Activated B cell treated with CpG ODN at 0.5 μM for 24 hours (primary cell): ENCODE measurements at regions of chr18 and their contacts with region 1.

Region 1: GRCh38 chr18:48951448-48952286 is 902 bp upstream of the SMAD7 start:
- DNase-seq: peak; percentile 77
- ATAC-seq: peak; percentile 46
- H3K4me3 Mint-ChIP-seq: peak overlapping the region; percentile 95
- H3K27ac Mint-ChIP-seq: peak overlapping the region; percentile 98
- H3K4me1 Mint-ChIP-seq: peaks cover 32% of the 10 kb centered on the region
- H3K27me3 Mint-ChIP-seq: no peaks in the 10 kb centered on the region
- CTCF ChIP-seq: no peak

Region 2: GRCh38 chr18:48785091-48785614 is 166.5 kb before region 1 on chr18:
- CTCF ChIA-PET with region 1: interaction called, 5 read pairs
- POLR2A ChIA-PET with region 1: interaction called, 21 read pairs
- intact Hi-C with region 1: loop called (anchors 1 kb)
- DNase-seq: peak; percentile 47
- ATAC-seq: peak; percentile 91
- H3K4me3 Mint-ChIP-seq: peak overlapping the region; percentile 64
- H3K27ac Mint-ChIP-seq: peak overlapping the region; percentile 84
- H3K4me1 Mint-ChIP-seq: peaks cover 62% of the 10 kb centered on the region
- H3K27me3 Mint-ChIP-seq: no peaks in the 10 kb centered on the region
- CTCF ChIP-seq: no peak

Region 3: GRCh38 chr18:48868468-48869466 is 82.9 kb before region 1 on chr18:
- CTCF ChIA-PET with region 1: interaction called, 11 read pairs
- POLR2A ChIA-PET with region 1: interaction called, 11 read pairs
- intact Hi-C with region 1: loop called (anchors 1 kb)
- DNase-seq: peak; percentile 44
- ATAC-seq: peak; percentile 95
- H3K4me3 Mint-ChIP-seq: peak overlapping the region; percentile 13
- H3K27ac Mint-ChIP-seq: peak overlapping the region; percentile 85
- H3K4me1 Mint-ChIP-seq: peaks cover 17% of the 10 kb centered on the region
- H3K27me3 Mint-ChIP-seq: no peaks in the 10 kb centered on the region
- CTCF ChIP-seq: no peak

Region 4: DNA sequence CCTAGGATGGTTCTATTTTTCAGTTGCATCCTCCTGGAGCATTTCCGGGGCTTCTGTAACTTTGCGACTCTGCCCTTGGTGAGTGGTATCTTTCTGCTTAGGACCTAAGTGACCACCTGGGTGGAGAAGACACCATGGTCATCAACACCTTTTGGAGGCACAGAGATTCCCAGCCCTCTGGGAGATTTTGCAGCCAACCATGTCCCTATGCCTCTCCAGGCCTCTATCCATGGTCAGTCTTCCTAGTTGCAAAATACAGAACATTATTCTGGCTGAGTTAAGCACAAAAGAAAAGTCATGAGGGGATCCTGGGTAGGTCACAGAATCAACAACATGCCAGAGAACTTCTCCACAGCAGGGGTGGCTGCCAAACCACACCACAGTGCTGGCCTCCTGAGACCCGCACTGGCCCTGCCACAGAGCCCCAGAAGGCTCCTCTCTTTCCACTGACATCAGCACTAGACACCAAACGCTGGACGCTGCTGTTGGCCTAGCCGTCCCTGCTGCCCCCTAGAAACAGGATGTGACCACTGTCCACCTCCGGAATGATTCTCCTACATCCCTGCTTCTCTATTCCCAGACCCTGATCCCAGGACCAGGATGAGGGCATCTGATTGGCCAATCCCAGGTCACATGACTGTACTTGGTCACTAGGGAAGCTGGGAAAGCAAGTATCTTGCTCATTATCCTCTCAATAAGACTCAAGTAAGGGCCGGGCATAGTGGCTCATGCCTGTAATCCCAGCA is 48.6 kb before region 1 on chr18:
- CTCF ChIA-PET with region 1: no interaction called
- POLR2A ChIA-PET with region 1: no interaction called
- intact Hi-C with region 1: no loop called
- DNase-seq: peak; percentile 5
- ATAC-seq: no peak
- H3K4me3 Mint-ChIP-seq: no peak overlapping the region
- H3K27ac Mint-ChIP-seq: no peak overlapping the region
- H3K4me1 Mint-ChIP-seq: peaks cover 4% of the 10 kb centered on the region
- H3K27me3 Mint-ChIP-seq: no peaks in the 10 kb centered on the region
- CTCF ChIP-seq: no peak

Region 5: GRCh38 chr18:48940854-48941611 is 10.6 kb before region 1 on chr18:
- CTCF ChIA-PET with region 1: interaction called, 4 read pairs
- POLR2A ChIA-PET with region 1: interaction called, 34 read pairs
- intact Hi-C with region 1: loop called (anchors 1 kb)
- DNase-seq: peak; percentile 53
- ATAC-seq: peak; percentile 84
- H3K4me3 Mint-ChIP-seq: peak overlapping the region; percentile 76
- H3K27ac Mint-ChIP-seq: peak overlapping the region; percentile 95
- H3K4me1 Mint-ChIP-seq: peaks cover 61% of the 10 kb centered on the region
- H3K27me3 Mint-ChIP-seq: no peaks in the 10 kb centered on the region
- CTCF ChIP-seq: no peak

Region 6: GRCh38 chr18:49041435-49042245 is 90.0 kb after region 1 on chr18:
- CTCF ChIA-PET with region 1: no interaction called
- POLR2A ChIA-PET with region 1: interaction called, 6 read pairs
- intact Hi-C with region 1: loop called (anchors 5 kb)
- DNase-seq: no peak
- ATAC-seq: no peak
- H3K4me3 Mint-ChIP-seq: no peak overlapping the region
- H3K27ac Mint-ChIP-seq: no peak overlapping the region
- H3K4me1 Mint-ChIP-seq: peaks cover 3% of the 10 kb centered on the region
- H3K27me3 Mint-ChIP-seq: no peaks in the 10 kb centered on the region
- CTCF ChIP-seq: no peak

Region 7: GRCh38 chr18:50429207-50429948 is 1477.7 kb after region 1 on chr18:
- CTCF ChIA-PET with region 1: no interaction called
- POLR2A ChIA-PET with region 1: interaction called, 12 read pairs
- intact Hi-C with region 1: no loop called
- DNase-seq: no peak
- ATAC-seq: no peak
- H3K4me3 Mint-ChIP-seq: no peak overlapping the region
- H3K27ac Mint-ChIP-seq: no peak overlapping the region
- H3K4me1 Mint-ChIP-seq: no peaks in the 10 kb centered on the region
- H3K27me3 Mint-ChIP-seq: peaks cover 5% of the 10 kb centered on the region
- CTCF ChIP-seq: no peak